Panc1 (cell line): ENCODE measurements at regions of chr15 and their contacts with region 1.

Region 1: DNA sequence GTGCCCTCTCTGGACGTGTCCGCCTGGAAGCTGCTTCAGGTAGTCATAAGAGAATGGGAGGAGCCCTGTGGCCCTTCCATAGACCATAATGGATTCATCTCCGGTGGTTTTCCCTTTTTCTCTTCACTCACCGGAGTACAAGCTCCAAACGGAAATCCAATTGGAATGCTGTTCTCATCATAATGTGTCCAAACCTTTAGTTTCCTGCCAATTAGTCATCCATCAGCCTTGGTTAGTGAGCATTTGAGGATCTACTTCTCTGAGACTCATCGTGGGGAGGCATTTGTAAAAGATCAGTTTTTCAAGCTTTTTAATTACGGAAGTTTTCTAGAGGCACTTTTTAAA is 34.9 kb downstream of the ABHD2 start:
- DNase-seq: no peak
- ATAC-seq: no peak
- H3K4me3 ChIP-seq: no peak overlapping the region
- H3K27ac ChIP-seq: no peak overlapping the region
- H3K4me1 ChIP-seq: peaks cover 8% of the 10 kb centered on the region
- H3K27me3 ChIP-seq: no peaks in the 10 kb centered on the region
- CTCF ChIP-seq: no peak

Region 2: DNA sequence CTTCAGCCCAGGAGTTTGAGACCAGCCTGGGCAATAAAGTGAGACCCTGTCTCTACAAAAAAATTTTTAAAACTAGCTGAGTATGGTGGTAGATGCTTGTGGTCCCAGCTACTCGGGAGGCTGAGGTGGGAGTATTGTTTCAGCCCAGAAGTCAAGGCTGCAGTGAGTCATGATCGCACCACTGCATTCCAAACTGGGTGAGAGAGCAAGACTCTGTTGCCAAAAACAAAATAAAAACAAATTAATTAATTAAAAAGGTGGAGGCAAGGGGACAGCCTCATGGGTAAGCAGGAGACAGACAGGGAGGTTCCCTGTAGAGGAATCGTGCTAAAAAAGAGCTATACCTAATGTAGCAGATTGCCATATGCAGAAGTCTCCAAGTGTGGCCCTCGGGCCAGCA is 240.4 kb before region 1 on chr15:
- CTCF ChIA-PET with region 1: no interaction called
- POLR2A ChIA-PET with region 1: no interaction called
- in situ Hi-C with region 1: no loop called
- intact Hi-C with region 1: no loop called
- DNase-seq: no peak
- ATAC-seq: no peak
- H3K4me3 ChIP-seq: no peak overlapping the region
- H3K27ac ChIP-seq: no peak overlapping the region
- H3K4me1 ChIP-seq: no peaks in the 10 kb centered on the region
- H3K27me3 ChIP-seq: no peaks in the 10 kb centered on the region
- CTCF ChIP-seq: no peak

Region 3: DNA sequence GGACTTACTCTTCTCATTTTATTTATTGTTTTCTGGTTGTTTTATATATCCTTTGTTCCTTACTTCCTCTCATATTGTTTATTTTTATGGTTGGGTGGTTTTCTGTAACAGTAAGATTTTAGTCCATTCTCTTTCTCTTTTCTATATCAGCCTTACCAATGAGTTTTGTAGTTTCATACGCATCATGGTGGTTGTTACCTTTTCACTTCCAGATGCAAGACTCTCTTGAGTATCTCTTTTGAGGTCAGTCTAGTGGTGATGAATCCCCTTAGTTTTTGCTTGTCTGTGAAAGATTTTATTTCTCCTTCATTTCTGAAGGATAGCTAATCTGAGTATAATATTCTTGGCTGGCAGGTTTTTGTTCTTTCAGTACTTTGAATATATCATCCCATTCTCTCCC is 152.9 kb before region 1 on chr15:
- CTCF ChIA-PET with region 1: no interaction called
- POLR2A ChIA-PET with region 1: interaction called, 12 read pairs
- in situ Hi-C with region 1: no loop called
- intact Hi-C with region 1: no loop called
- DNase-seq: no peak
- ATAC-seq: no peak
- H3K4me3 ChIP-seq: no peak overlapping the region
- H3K27ac ChIP-seq: peak overlapping the region; percentile 12; the same call in 1 of the 2 replicates
- H3K4me1 ChIP-seq: no peaks in the 10 kb centered on the region
- H3K27me3 ChIP-seq: no peaks in the 10 kb centered on the region
- CTCF ChIP-seq: no peak

Region 4: DNA sequence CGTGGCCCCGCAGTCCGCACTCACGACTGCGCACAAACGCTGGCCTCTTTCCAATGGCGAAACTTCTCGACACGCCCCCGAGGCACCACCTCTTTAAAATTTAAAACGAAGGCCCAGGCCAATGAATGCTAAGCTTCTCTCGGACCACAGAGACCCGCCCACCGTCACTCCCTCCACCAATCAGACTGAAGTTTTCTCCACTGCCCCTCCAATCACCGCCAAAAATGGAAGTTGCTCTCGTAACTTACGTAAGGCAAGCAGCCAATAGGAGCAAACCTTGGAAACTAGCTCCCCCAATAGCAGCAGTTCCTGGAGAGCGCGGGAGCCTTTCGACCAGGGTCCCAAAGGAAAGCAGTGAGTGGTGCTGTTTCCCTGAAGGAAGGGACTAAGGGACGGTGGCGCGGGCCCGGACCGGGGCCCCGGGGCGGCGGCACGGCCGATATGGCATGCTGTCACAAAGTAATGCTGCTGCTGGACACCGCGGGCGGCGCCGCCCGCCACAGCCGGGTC is 452.0 kb after region 1 on chr15 and contains the start of gene TICRR:
- CTCF ChIA-PET with region 1: no interaction called
- POLR2A ChIA-PET with region 1: no interaction called
- in situ Hi-C with region 1: no loop called
- intact Hi-C with region 1: no loop called
- DNase-seq: peak; percentile 99
- ATAC-seq: peak; percentile 97
- H3K4me3 ChIP-seq: peak within 1 kb of the TSS; percentile 73 to 76
- H3K27ac ChIP-seq: peak within 1 kb of the TSS; percentile 86
- H3K4me1 ChIP-seq: peaks cover 12% of the 10 kb centered on the region
- H3K27me3 ChIP-seq: no peaks in the 10 kb centered on the region
- CTCF ChIP-seq: no peak
- total RNA-seq, gene TICRR: 20.5 TPM